ENCODE measurements at regions of chr1 and their contacts with region 1.

Region 1: DNA sequence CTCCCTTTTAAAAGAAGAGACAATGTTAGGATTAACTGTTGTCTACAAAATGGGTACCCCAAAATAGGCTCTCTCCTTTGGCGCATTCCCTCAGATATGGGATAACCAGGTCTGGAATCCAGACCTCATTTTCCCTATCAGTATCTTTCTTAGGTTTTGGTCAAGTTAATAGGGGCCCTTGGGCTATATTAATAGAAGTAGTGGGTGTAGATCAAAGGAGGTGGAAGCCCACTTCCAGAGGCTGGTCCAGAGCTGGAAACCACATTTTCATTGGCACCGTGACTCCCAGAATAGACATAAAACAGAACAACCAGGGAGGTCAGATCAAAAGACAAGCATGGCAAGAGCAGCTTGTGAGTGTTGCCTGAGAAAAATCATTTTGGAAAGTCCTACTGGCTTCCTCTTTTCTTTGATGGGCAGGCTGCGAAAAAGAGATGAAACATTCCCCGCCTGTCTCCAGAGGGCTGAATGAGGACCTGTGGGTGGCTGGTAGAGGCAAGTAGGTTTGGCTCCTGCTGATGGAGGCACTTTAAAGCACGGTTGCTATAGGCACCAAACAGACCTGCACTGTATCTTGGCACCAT is 25.8 kb upstream of the KIF21B start:
- DNase-seq: no peak
- H3K4me3 ChIP-seq: no peak overlapping the region
- H3K27ac ChIP-seq: no peak overlapping the region
- H3K27me3 ChIP-seq: no peaks in the 10 kb centered on the region
- CTCF ChIP-seq: no peak

Region 2: GRCh38 chr1:200561856-200562214 is 487.5 kb before region 1 on chr1:
- intact Hi-C with region 1: loop called in 1 of 2 experiments (anchors 5 kb)
- DNase-seq: no peak
- H3K4me3 ChIP-seq: no peak overlapping the region
- H3K27ac ChIP-seq: no peak overlapping the region
- H3K27me3 ChIP-seq: no peaks in the 10 kb centered on the region
- CTCF ChIP-seq: no peak

Region 3: DNA sequence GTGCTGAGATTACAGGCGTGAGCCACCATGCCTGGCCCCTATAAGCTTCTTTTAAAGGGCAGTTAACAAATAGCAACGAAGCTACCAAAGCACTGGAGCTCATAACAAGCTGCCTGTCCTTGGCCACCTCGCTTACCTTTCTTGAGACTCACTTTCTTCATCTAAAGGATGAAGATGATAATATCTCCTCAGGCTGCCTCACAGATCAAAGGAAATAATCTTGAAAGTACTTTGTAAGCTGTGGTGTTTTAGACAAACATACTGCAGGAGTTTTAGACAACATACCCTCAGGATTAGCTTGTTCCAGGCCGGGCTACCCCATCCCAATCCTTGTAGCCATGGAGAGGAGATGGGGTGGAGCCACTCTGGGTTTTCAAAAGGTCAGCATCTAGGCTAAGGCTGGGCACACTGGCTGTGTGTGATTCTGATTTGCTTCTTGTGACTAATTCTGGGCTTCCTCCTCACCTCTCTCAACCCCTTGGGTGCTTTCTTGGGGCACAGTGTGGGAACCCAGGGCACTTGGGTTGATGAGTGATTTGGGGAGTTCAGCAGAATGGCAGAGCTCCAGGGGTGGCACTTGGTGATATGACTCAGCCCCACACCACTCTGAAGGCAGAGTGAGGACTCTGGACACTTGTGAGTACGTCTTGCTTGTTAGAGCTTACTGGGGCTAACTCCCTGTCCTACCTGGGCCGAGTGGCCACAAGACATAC is 171.3 kb before region 1 on chr1:
- intact Hi-C with region 1: no loop called
- DNase-seq: no peak
- H3K4me3 ChIP-seq: no peak overlapping the region
- H3K27ac ChIP-seq: no peak overlapping the region
- H3K27me3 ChIP-seq: peaks cover 0 to 24% (median 11%) of the 10 kb centered on the region in 45 donors
- CTCF ChIP-seq: no peak

Region 4: DNA sequence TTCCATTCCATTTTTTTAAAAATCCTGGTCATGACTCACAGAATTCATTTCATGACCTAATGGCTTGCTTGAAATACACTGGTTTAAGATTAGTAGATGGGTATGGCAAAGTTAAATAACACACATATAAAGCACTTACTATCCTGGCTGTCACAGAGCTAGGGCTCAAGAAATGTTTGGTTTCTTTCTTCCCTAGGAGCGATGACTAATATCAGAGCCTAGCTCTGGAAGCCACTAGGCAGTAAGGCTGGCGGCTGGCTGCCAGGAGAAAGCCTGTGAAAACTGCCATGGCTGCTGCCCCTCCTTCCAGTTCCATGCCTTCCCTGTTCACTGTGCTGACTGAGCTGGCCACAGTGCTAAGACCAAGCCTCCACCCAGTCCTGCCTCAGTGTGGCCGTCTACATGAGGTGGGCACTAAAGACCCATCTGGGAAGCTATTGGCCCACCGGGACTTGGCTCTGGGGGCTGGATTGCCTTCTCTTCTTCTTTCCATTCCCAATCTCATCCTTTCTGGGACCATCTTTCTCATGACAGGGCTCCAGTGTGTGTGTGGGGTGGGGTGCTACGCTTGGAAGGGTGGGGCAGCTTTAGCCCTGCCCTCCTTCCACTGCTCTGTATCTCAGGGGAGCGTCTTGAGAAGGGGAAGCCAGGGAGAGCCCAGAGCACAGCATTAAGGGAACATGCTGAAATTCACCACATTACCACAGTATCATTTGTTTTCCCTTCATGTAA is 88.4 kb after region 1 on chr1:
- intact Hi-C with region 1: no loop called
- DNase-seq: peak in 9 of 10 donors; percentile 60 to 83 (median 77)
- H3K4me3 ChIP-seq: no peak overlapping the region
- H3K27ac ChIP-seq: peak overlapping the region in 54 of 59 donors; percentile 4 to 86 (median 71)
- H3K27me3 ChIP-seq: no peaks in the 10 kb centered on the region
- CTCF ChIP-seq: peak in 2 of 56 donors; percentile 9 to 16

Measured in dorsolateral prefrontal cortex (tissue), 120 donors.